ENCODE measurements at regions of chr9 and their contacts with region 1.

Region 1: DNA sequence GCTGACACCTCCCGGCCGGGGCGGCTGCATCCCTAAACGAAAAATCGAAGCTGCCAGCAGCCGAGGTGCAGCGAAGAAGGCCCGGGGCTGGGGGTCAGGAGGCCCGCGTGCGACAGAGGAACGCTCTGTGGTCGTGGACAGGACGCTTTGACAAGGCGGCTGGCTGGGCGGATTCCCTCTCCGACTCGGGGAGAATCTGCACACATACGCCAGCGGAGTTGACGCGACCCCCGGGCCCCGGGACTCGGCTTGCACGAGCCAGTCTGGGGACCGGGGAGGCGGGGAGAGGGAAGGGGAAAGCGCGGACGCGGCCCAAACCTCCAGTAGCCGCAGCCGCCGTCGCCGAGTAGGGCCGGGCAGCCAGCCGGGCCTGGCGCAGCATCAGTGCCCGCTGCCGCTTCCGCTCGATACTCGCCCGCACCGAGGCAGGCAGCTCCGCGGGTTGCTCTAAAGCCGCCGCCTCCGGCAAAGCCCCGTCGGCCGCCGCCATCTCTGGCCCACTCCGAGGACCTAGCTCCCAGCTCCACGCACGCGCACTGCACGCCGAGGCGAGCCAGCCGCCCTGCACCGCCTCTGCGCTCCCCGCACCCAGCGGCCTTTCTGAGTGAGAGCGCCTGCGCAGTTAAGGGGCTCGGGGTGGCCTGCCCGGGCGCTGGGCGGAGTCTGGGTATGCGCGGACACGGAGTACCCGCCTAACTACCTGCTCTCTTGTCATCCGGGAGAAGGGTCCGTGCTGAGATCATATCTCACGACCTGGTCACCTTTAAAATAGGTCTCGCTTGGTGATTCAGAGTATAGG is at the start of gene XPA:
- DNase-seq: peak; percentile 98
- H3K4me3 Mint-ChIP-seq: peak within 1 kb of the TSS; percentile 91
- H3K27ac Mint-ChIP-seq: peak within 1 kb of the TSS; percentile 91
- H3K4me1 Mint-ChIP-seq: peaks cover 47% of the 10 kb centered on the region
- H3K27me3 Mint-ChIP-seq: no peaks in the 10 kb centered on the region
- total RNA-seq, gene XPA: 8.5 to 9.6 TPM

Region 2: GRCh38 chr9:97640325-97640724 is 56.7 kb before region 1 on chr9:
- CTCF ChIA-PET with region 1: no interaction called
- POLR2A ChIA-PET with region 1: no interaction called
- intact Hi-C with region 1: no loop called
- DNase-seq: no peak
- H3K4me3 Mint-ChIP-seq: no peak overlapping the region
- H3K27ac Mint-ChIP-seq: no peak overlapping the region
- H3K4me1 Mint-ChIP-seq: peaks cover 43% of the 10 kb centered on the region
- H3K27me3 Mint-ChIP-seq: no peaks in the 10 kb centered on the region

Region 3: DNA sequence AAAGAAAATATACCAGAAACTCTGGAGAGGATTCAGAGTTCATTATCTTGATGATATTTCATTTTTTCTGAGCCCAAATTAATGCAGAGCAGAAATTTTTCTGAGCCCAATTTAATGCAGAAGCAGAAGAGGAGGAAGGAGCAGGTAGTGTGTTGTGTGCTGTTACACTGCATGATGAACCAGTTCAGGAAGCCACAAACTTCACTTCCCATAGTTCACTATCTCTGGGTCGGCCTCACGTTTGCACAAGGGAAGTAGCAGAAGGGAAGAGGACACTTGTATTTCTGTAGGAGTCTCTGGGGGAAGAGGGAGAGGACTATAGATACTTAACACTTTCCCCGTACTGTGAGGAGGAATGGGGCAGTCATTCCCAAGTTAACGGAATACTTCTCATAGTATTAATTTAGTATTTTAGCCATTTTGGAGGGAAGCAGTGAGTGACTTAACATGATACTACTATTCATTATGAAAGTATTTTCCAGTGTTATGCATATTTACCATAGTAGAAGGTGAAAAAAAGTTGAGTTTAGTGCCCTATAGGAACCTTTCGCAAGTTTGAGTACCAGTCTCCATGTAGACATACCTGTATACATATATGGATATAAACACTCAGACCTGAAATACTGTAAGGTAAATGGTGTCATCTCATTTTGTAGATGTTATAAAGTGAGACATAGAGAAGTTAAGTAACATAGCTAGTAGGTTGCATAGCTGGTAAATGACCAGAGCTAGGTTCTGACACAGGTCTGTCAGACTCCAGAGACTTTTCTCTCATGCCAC is 29.9 kb before region 1 on chr9:
- CTCF ChIA-PET with region 1: no interaction called
- POLR2A ChIA-PET with region 1: no interaction called
- intact Hi-C with region 1: no loop called
- DNase-seq: no peak
- H3K4me3 Mint-ChIP-seq: no peak overlapping the region
- H3K27ac Mint-ChIP-seq: peak overlapping the region; percentile 52
- H3K4me1 Mint-ChIP-seq: peaks cover 37% of the 10 kb centered on the region
- H3K27me3 Mint-ChIP-seq: no peaks in the 10 kb centered on the region

Region 4: GRCh38 chr9:97809666-97810344 is 112.8 kb after region 1 on chr9:
- CTCF ChIA-PET with region 1: no interaction called
- POLR2A ChIA-PET with region 1: no interaction called
- intact Hi-C with region 1: loop called (anchors 5 kb)
- DNase-seq: no peak
- H3K4me3 Mint-ChIP-seq: no peak overlapping the region
- H3K27ac Mint-ChIP-seq: no peak overlapping the region
- H3K4me1 Mint-ChIP-seq: peaks cover 2% of the 10 kb centered on the region
- H3K27me3 Mint-ChIP-seq: peaks cover 8% of the 10 kb centered on the region

Region 5: GRCh38 chr9:97900738-97901565 is 203.9 kb after region 1 on chr9:
- CTCF ChIA-PET with region 1: interaction called, 10 read pairs
- POLR2A ChIA-PET with region 1: no interaction called
- intact Hi-C with region 1: loop called (anchors 2 kb)
- DNase-seq: no peak
- H3K4me3 Mint-ChIP-seq: no peak overlapping the region
- H3K27ac Mint-ChIP-seq: no peak overlapping the region
- H3K4me1 Mint-ChIP-seq: peaks cover 55% of the 10 kb centered on the region
- H3K27me3 Mint-ChIP-seq: no peaks in the 10 kb centered on the region

Region 6: DNA sequence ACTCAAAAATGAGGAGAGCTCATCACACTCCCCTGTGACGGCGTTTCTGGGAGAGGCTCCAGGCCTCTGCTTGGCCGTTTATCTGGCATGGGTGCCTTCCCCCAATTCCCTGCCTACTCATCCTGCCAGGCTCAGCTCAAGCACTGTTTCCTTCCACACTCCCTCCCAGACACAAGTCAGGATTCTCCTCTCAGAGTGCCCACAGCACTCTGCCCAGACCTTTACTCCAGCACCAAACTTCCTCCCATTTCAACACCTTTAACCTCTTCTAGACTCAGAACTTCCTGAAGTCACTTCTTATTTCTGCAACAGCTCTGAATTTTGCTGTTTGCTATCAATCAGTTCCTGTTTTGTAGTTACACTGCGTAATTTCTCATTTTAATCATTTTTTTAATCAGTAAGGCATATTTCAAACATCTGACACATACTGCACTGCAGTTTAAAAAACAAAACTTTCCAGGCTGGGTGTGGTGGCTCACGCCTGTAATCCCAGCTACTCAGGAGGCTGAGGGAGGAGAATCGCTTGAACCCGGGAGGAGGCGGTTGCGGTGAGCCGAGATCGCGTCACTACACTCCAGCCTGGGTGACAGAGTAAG is 209.3 kb after region 1 on chr9:
- CTCF ChIA-PET with region 1: interaction called, 10 read pairs
- POLR2A ChIA-PET with region 1: no interaction called
- intact Hi-C with region 1: loop called (anchors 2 kb)
- DNase-seq: peak; percentile 74
- H3K4me3 Mint-ChIP-seq: peak overlapping the region; percentile 66
- H3K27ac Mint-ChIP-seq: peak overlapping the region; percentile 94
- H3K4me1 Mint-ChIP-seq: peaks cover 78% of the 10 kb centered on the region
- H3K27me3 Mint-ChIP-seq: no peaks in the 10 kb centered on the region

Measured in activated CD4-positive, alpha-beta memory T cell treated with anti-CD3 and anti-CD28 coated beads for 36 hours (primary cell).